Ascending aorta (tissue), 2 donors: ENCODE measurements at regions of chr4 and their contacts with region 1.

Region 1: DNA sequence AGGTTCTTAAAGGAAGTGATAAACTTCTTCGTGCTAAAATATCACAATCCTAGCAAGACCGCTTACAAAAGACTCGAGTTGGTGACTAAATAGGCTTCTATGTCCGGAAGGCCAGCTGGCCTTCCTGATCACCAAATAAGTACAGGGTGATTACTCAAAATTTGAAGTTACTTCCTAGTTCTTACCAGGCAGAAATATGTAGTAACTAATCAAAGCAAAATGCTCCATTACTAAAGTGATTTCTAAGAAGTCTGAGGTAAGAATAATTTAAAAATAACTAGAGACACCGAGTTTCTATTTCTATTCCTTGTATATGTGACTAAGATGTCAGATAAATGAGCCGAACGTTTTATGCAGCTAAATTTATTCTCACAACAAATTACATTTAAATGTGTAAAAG is 62.2 kb downstream of the NSUN7 start:
- DNase-seq: no peak
- H3K4me3 ChIP-seq: no peak overlapping the region
- H3K27ac ChIP-seq: peak overlapping the region; percentile 60 to 66
- H3K4me1 ChIP-seq: no peaks in the 10 kb centered on the region
- H3K27me3 ChIP-seq: no peaks in the 10 kb centered on the region
- CTCF ChIP-seq: no peak

Region 2: DNA sequence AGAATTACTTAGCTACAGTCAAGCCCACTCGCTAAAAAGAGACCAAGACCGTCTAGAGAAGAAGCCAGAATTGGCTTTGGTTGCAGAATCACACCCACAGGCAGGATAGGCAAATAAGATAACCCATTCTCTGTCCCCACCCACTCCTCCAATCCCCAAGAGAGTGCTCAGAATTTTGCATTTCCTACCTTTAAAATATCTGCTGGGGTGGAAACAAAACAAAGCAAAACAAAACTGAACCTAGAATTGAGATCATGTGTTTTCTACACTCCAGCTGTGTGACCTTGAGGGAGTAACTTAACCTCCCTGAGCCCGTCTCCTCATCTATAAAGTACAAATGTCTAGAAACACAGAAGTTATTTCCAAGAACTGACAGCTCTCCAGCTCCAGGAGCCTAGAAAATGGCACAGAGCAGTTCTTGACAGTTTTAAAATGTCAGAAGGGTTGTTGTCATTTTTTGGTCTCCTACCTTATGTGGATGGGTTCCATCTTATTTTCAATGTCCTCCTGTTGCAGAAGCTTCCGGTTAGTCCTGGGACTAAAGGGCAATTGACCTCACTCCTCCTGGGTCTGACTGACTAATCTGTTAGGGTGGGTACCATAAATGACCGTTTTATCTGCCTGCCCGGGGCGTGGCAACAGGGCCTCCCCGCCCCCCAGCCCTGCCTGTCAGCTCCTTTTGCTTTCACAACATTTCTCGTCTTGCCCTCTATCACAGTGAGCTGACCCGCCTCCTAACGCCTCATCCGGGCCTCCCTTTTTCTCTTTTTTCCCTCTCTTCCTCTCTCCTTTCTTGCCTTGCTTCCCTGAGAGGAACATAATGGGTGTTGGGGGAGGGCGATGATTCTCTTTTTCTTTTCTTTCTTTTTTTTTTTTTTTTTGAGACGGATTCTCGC is 296.3 kb before region 1 on chr4:
- intact Hi-C with region 1: no loop called
- DNase-seq: no peak
- H3K4me3 ChIP-seq: no peak overlapping the region
- H3K27ac ChIP-seq: no peak overlapping the region
- H3K4me1 ChIP-seq: no peaks in the 10 kb centered on the region
- H3K27me3 ChIP-seq: no peaks in the 10 kb centered on the region
- CTCF ChIP-seq: no peak

Region 3: DNA sequence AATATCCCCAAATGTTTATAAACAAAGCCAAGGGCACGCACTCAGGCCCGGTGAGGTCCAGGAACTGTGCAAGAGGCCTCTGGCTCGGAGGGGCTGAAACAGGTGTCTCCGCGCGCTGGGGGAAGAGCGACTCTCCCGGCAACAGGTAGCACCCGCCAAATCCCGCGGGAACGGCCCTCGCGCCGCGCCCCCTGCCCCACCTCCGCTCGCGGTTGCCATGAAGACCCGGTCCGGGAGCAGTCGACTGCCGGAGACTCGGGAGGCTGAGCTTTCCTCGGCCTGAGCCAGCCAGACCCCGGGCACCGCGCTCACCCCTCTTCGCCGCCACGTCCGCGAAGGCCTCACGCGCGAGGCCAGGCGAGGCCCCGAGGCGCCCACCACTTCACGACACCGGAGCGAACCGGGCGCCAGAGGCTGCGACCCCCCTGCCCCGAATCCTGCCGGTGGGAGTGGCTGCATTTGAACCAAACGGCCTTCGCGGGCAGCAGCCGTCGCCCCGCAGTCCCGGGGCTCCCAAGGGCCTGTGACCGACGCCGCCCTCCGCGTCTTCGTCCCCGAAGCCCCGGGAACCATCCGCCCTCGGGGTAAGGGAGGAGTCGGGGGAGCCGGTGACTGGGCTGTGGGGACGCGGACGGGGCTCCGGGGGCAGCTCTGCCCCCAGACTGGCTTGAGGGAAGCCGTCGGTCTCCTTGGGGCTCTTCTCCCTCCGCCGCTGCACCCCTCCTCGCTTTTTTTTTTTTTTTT is 62.1 kb before region 1 on chr4 and contains the start of gene NSUN7:
- intact Hi-C with region 1: loop called (anchors 5 kb)
- DNase-seq: peak in 1 of 2 donors; percentile 71
- H3K4me3 ChIP-seq: peak within 1 kb of the TSS; percentile 54 to 70
- H3K27ac ChIP-seq: peak within 1 kb of the TSS; percentile 45 to 53
- H3K4me1 ChIP-seq: no peaks in the 10 kb centered on the region
- H3K27me3 ChIP-seq: no peaks in the 10 kb centered on the region
- CTCF ChIP-seq: no peak
- total RNA-seq, gene NSUN7: 5.0 TPM

Region 4: GRCh38 chr4:40881851-40882250 is 69.9 kb after region 1 on chr4:
- intact Hi-C with region 1: loop called (anchors 2 kb)
- DNase-seq: no peak
- H3K4me3 ChIP-seq: no peak overlapping the region
- H3K27ac ChIP-seq: peak overlapping the region; percentile 20
- H3K4me1 ChIP-seq: peaks cover 3 to 14% of the 10 kb centered on the region in 2 donors
- H3K27me3 ChIP-seq: no peaks in the 10 kb centered on the region
- CTCF ChIP-seq: no peak

Region 5: DNA sequence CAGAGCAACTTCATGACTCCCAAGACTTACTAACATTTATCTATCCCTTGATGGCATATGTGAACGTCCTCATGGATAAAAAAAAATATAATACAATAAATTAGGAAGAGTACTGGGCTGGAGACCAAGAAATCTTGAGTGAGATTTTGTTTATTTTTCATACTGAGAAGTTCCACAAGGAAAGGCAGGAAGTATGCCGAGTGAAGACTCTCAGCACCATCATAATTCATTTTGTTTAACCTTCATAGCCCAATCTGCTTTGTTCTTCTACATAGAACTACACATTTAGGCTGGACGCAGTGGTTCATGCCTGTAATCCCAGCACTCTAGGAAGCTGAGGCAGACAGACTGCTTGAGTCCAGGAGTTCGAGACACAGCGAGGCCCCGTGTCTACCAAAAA is 136.1 kb after region 1 on chr4:
- intact Hi-C with region 1: no loop called
- DNase-seq: no peak
- H3K4me3 ChIP-seq: no peak overlapping the region
- H3K27ac ChIP-seq: peak overlapping the region in 1 of 2 donors; percentile 51
- H3K4me1 ChIP-seq: peaks cover 2 to 23% of the 10 kb centered on the region in 2 donors
- H3K27me3 ChIP-seq: no peaks in the 10 kb centered on the region
- CTCF ChIP-seq: no peak

Region 6: GRCh38 chr4:41133454-41134018 is 321.6 kb after region 1 on chr4:
- intact Hi-C with region 1: no loop called
- DNase-seq: no peak
- H3K4me3 ChIP-seq: no peak overlapping the region
- H3K27ac ChIP-seq: peak overlapping the region; percentile 14 to 51
- H3K4me1 ChIP-seq: peaks cover 0 to 34% of the 10 kb centered on the region in 2 donors
- H3K27me3 ChIP-seq: no peaks in the 10 kb centered on the region
- CTCF ChIP-seq: no peak